ENCODE measurements at regions of chr19 and their contacts with region 1.

Region 1: GRCh38 chr19:18521885-18522624 is at the start of gene ELL:
- DNase-seq: peak; percentile 100
- H3K4me3 ChIP-seq: peak within 1 kb of the TSS; percentile 85 to 100 (median 94)
- H3K27ac ChIP-seq: peak within 1 kb of the TSS; percentile 99 to 100 (median 99)
- H3K4me1 ChIP-seq: peaks cover 0 to 18% (median 15%) of the 10 kb centered on the region in 4 donors
- H3K27me3 ChIP-seq: no peaks in the 10 kb centered on the region
- CTCF ChIP-seq: no peak
- EP300 ChIP-seq: peak in 1 of 4 donors; percentile 68
- POLR2A ChIP-seq: peak; percentile 95 to 97
- total RNA-seq, gene ELL: 7.1 to 20.2 (median 11.9) TPM

Region 2: DNA sequence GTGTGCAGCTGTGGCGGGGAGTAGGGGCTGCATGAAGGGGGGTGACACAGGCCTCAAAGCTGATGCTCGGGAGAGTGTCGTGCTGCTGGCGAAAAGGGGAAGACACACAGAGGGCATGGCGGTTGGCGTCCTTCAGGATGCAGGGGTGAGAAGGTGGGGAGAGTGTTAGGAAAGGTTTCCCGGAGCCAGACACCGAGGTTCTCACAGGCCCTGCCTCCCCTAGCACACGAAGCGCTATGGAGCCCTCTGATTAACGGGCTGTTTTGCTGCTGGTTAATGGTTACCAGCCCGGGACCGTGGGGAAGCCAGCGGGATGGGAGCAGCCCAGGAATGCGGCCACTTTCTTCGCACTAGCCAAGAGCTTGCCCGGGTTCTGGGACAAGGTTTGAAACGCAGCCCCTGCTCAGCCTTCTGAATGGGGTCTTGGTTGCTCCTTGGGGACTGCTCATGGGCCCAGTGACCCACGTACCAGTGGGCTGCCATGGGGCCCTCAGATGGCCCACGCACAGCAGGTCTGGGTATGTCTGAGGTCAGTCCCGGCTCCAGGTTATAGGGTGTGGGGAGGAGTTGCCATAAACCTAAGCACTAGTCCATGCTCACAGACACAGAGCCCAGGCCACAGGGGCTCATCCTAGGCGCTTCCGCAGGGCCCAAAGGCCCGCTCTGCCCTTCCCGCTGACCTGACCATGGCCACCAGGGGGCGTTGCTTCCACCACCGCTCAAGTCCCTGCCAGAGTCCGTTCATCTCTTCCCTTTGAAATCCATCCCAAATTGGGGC is 52.8 kb before region 1 on chr19:
- intact Hi-C with region 1: loop called (anchors 5 kb)
- DNase-seq: peak; percentile 84
- H3K4me3 ChIP-seq: no peak overlapping the region
- H3K27ac ChIP-seq: peak overlapping the region in 1 of 4 donors; percentile 25
- H3K4me1 ChIP-seq: peaks cover 0 to 58% (median 56%) of the 10 kb centered on the region in 4 donors
- H3K27me3 ChIP-seq: no peaks in the 10 kb centered on the region
- CTCF ChIP-seq: peak; percentile 40 to 66 (median 60)
- EP300 ChIP-seq: no peak
- POLR2A ChIP-seq: no peak

Region 3: GRCh38 chr19:18480006-18480691 is 41.9 kb before region 1 on chr19:
- intact Hi-C with region 1: loop called (anchors 2 kb)
- DNase-seq: peak; percentile 97
- H3K4me3 ChIP-seq: no peak overlapping the region
- H3K27ac ChIP-seq: peak overlapping the region; percentile 78 to 87 (median 83)
- H3K4me1 ChIP-seq: peaks cover 0 to 62% (median 53%) of the 10 kb centered on the region in 4 donors
- H3K27me3 ChIP-seq: no peaks in the 10 kb centered on the region
- CTCF ChIP-seq: no peak
- EP300 ChIP-seq: peak; percentile 63 to 94 (median 85)
- POLR2A ChIP-seq: no peak

Region 4: GRCh38 chr19:18542936-18543815 is 21.1 kb after region 1 on chr19 and contains the start of gene FKBP8:
- intact Hi-C with region 1: loop called (anchors 2 kb)
- DNase-seq: peak; percentile 97
- H3K4me3 ChIP-seq: peak within 1 kb of the TSS; percentile 84 to 98 (median 90)
- H3K27ac ChIP-seq: peak within 1 kb of the TSS; percentile 92 to 99 (median 94)
- H3K4me1 ChIP-seq: peaks cover 0 to 18% (median 13%) of the 10 kb centered on the region in 4 donors
- H3K27me3 ChIP-seq: no peaks in the 10 kb centered on the region
- CTCF ChIP-seq: no peak
- EP300 ChIP-seq: no peak
- POLR2A ChIP-seq: no peak
- total RNA-seq, gene FKBP8: 366 to 456 (median 403) TPM

Region 5: DNA sequence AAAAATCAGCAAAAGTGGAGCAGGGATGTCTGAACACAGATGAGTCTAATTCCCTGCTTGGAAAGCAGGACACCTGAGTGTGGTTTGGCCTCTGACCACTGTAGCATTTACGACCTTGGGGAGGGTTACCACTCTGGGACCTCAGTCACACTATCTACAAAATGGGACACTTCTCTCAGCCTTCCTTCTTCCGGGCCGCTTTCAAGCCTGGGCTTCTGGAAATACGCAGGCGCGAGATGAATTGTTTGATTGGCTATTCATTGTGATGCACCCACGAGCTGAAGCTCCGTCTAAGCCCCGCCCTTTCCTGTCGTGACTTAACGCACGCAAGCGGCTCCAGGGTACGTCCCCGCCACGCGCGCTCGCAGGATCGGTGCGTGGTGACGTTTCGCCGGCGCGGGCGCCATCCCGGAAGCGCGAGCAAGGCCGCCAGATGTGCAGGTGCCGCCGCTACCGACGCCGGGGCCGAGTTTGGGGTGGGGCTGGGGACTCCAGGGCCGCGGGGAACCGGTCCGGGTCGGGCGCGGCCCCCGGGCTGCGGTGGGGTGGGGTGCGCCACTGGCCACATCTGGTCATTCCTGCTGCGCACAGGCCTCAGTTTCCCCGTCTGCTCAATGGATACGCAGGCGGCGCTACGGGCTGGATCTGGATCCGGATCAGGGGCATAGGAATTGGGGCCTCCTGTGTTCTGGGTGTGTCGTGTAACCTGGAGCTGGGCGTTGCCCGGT is 35.6 kb after region 1 on chr19 and contains the start of gene KXD1:
- intact Hi-C with region 1: loop called (anchors 1 kb)
- DNase-seq: peak; percentile 99
- H3K4me3 ChIP-seq: peak within 1 kb of the TSS; percentile 56 to 95 (median 77)
- H3K27ac ChIP-seq: peak within 1 kb of the TSS; percentile 86 to 98 (median 92)
- H3K4me1 ChIP-seq: peaks cover 0 to 16% (median 7%) of the 10 kb centered on the region in 4 donors
- H3K27me3 ChIP-seq: no peaks in the 10 kb centered on the region
- CTCF ChIP-seq: no peak
- EP300 ChIP-seq: peak in 2 of 4 donors; percentile 18 to 87
- POLR2A ChIP-seq: peak; percentile 61 to 71
- total RNA-seq, gene KXD1: 107 to 122 (median 120) TPM

Region 6: DNA sequence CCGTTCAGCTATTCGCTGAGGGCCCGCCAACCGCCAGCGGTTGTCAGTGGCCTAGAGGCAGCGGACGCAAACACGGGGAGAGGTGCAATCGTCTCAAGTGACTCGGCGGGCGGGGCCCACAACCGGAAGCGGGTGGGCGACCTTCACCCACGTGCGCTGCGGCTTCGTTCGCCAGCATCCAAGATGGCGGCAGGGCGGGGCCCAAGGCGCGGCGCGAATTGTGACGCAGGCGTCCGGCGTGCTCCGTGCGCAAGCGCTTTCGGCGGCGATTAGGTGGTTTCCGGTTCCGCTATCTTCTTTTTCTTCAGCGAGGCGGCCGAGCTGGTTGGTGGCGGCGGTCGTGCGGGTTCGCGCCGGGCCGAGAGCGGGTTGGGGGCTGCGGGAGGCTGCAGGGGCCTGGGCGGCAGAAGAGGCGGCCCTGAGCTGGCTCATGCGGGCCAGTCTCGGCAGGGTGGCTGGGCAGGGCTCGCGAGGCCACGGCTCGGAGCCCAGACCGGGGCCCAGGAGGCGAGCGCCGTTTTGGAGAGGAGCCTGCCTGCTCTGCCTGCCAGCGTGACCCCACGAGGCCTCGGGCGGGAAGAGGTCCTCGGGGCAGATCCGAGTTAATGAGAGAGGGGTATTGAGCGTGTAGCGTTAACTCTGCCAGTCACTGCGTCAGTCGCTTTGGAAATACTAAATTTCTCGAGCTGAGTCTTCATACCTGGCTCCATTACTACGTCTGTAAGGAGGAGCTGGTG is 49.7 kb after region 1 on chr19 and contains the start of gene UBA52:
- intact Hi-C with region 1: loop called (anchors 5 kb)
- DNase-seq: peak; percentile 99
- H3K4me3 ChIP-seq: peak within 1 kb of the TSS; percentile 67 to 99 (median 92)
- H3K27ac ChIP-seq: peak within 1 kb of the TSS; percentile 88 to 96 (median 94)
- H3K4me1 ChIP-seq: peaks cover 0 to 25% (median 22%) of the 10 kb centered on the region in 4 donors
- H3K27me3 ChIP-seq: no peaks in the 10 kb centered on the region
- CTCF ChIP-seq: no peak
- EP300 ChIP-seq: peak in 2 of 4 donors; percentile 17 to 85
- POLR2A ChIP-seq: peak; percentile 87 to 91
- total RNA-seq, gene UBA52: 450 to 1,088 (median 720) TPM

Region 7: DNA sequence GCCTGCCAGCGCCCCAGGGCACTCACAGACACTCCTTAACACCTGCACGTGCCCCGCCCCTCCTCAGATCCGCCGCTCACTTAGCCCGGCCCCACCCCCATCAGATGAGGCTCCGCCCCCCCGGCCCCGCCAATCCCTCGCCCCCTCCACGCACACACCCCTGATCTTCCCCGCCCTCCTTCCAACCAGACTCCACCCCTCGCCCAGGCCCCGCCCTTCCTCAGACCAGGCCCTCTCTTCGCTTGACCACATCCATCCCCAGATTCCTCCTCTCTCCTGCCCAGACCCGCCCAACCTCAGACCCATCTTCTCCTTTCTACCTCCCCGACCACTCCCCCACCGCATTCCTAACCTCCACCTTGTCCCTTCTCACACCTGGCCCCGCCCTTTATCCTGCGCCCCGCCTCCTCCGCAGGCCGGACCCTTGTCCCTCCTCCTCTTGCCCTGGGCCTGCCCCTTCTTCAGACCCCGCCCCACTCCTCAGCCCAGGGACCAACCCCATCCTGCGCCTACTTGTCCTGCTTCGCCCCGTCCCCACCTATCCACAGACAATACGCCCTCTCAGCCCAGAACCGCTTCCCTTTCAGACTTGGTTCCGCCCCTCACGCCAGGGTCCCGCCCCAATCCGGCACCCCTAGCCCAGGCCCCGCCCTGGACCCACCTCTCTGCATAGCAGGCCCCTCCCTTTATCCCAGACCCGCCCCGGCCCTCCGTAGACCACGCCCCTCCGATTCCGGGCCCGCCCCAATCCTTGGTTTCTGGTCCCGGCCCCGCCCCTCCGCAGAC is 114.3 kb after region 1 on chr19:
- intact Hi-C with region 1: no loop called
- DNase-seq: peak; percentile 99
- H3K4me3 ChIP-seq: peak overlapping the region; percentile 72 to 97 (median 92)
- H3K27ac ChIP-seq: peak overlapping the region; percentile 86 to 94 (median 90)
- H3K4me1 ChIP-seq: peaks cover 0 to 26% (median 21%) of the 10 kb centered on the region in 4 donors
- H3K27me3 ChIP-seq: no peaks in the 10 kb centered on the region
- CTCF ChIP-seq: no peak
- EP300 ChIP-seq: no peak
- POLR2A ChIP-seq: no peak

Region 8: GRCh38 chr19:18756896-18757295 is 234.8 kb after region 1 on chr19:
- intact Hi-C with region 1: no loop called
- DNase-seq: no peak
- H3K4me3 ChIP-seq: no peak overlapping the region
- H3K27ac ChIP-seq: no peak overlapping the region
- H3K4me1 ChIP-seq: peaks cover 0 to 12% (median 10%) of the 10 kb centered on the region in 4 donors
- H3K27me3 ChIP-seq: no peaks in the 10 kb centered on the region
- CTCF ChIP-seq: no peak
- EP300 ChIP-seq: no peak
- POLR2A ChIP-seq: no peak

Measured in sigmoid colon (tissue), 7 donors.